ENCODE measurements at regions of chr10 and their contacts with region 1.

Region 1: DNA sequence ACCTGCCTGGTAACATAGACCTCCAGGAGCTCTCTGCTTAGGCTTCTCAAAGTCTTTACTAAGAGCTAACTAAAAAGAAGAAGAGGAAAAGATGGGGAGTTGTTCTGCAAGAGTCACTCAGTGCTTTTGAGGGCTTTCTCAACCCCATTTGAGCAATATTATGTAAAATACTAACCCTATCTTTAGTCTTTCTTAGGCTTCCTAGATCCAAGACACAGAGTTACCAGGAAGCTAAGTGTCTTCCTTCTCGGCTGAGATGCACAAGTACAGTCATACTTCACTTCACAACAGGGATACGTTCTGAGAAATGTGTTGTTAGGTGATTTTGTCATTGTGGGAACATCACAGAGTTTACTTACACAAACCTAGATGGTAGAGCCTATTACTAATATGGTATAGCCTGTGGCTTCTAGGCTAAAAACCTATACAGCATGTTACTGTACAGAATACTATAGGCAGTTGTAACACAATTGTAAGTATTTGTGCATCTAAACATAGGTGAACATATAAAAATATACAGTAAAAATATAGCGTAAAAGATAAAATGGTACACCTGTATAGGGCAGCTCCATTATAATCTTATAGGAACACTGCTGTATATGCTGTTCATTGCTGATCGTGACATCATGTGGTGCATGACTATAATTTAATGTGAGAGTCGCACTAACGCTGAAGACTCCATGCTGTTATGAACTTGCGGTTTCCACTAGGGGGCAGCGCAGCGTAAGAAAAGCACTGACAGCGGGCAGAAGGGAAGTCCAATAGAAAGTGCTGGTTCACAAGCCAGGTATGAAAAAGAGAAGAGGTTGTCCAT is 16.3 kb downstream of the ANKRD22 start:
- DNase-seq: peak; percentile 81
- ATAC-seq: peak; percentile 96

Region 2: DNA sequence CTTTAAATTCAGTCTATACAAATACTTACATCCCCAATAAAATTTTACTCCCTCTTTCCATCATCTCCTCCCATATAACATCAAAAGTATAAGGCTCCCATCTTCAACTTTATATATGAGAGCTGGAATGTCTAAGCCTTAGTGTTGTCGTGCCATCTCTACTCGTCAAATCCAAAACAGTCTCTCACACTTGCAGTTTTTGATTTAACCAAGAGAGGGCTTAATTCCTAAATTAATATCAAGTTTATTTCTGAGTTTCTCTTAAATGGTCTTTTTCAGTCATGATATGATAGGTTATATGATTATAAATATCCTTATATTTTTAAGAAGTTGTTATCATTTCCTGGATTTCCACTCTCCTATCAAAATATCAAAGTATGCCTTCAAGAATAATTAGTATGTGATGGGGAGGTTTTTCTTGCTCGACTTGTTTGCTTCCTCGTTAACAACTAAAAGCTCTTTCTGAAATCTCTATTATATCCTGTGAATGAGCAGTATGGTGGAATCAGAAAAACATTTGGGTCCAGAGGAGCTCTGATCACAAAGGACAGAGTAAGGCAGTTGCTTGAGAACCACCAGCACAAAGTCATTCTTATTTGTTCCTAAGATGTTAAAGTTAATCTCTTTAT is 141.8 kb before region 1 on chr10:
- intact Hi-C with region 1: no loop called
- DNase-seq: no peak
- ATAC-seq: no peak

Region 3: GRCh38 chr10:88865281-88865876 is 30.1 kb after region 1 on chr10:
- intact Hi-C with region 1: no loop called
- DNase-seq: no peak
- ATAC-seq: no peak

Region 4: GRCh38 chr10:88932539-88933256 is 97.4 kb after region 1 on chr10:
- intact Hi-C with region 1: loop called (anchors 1 kb)
- DNase-seq: no peak
- ATAC-seq: peak; percentile 75

Region 5: GRCh38 chr10:89001024-89001728 is 165.9 kb after region 1 on chr10:
- intact Hi-C with region 1: loop called (anchors 10 kb)
- DNase-seq: no peak
- ATAC-seq: peak; percentile 28